Left ventricle myocardium superior (tissue), 1 donor: ENCODE measurements at regions of chr15 and their contacts with region 1.

Region 1: DNA sequence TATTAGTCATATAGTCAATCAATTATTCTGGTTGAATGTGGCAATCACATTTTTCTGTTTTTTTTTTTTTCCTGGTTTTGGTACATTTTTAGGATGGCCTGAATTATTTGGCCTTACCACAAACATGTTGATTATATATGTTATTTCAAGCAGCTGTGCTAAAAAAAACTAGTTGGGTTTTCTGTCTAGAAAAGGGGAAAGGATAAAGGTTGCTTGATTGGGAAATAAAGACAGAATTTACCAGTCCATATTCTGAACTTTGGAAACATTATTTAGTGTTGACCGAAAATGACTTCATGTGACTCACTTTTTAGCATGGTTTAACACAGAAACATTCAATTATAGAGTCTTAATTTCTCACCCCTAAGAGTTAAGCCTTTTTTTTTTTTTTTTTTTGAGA is 8.1 kb downstream of the MORF4L1 start:
- DNase-seq: no peak
- ATAC-seq: no peak

Region 2: GRCh38 chr15:78663703-78664102 is 217.1 kb before region 1 on chr15:
- intact Hi-C with region 1: no loop called
- DNase-seq: no peak
- ATAC-seq: no peak

Region 3: GRCh38 chr15:78842519-78842918 is 38.3 kb before region 1 on chr15:
- intact Hi-C with region 1: loop called (anchors 2 kb)
- DNase-seq: no peak
- ATAC-seq: no peak

Region 4: GRCh38 chr15:79084308-79084968 is 203.6 kb after region 1 on chr15:
- intact Hi-C with region 1: no loop called
- DNase-seq: no peak
- ATAC-seq: no peak